CD4-positive, alpha-beta memory T cell (primary cell): ENCODE measurements at regions of chr6 and their contacts with region 1.

Region 1: GRCh38 chr6:26216356-26216885 is 129.2 kb downstream of the HFE start:
- DNase-seq: peak; percentile 88 to 96 (median 94)
- H3K4me3 ChIP-seq: peak overlapping the region; percentile 75 to 85
- H3K4me3 Mint-ChIP-seq: no peak overlapping the region
- H3K27ac ChIP-seq: peak overlapping the region; percentile 82
- H3K27ac Mint-ChIP-seq: no peak overlapping the region
- H3K4me1 ChIP-seq: peaks cover 26% of the 10 kb centered on the region
- H3K4me1 Mint-ChIP-seq: peaks cover 0 to 5% (median 2%) of the 10 kb centered on the region in 4 donors
- H3K27me3 ChIP-seq: no peaks in the 10 kb centered on the region
- H3K27me3 Mint-ChIP-seq: no peaks in the 10 kb centered on the region

Region 2: GRCh38 chr6:25085756-25086155 is 1130.7 kb before region 1 on chr6:
- CTCF ChIA-PET with region 1: no interaction called
- POLR2A ChIA-PET with region 1: no interaction called
- intact Hi-C with region 1: no loop called
- DNase-seq: peak in 4 of 5 donors; percentile 14 to 37 (median 22)
- H3K4me3 ChIP-seq: peak overlapping the region in 1 of 2 donors; percentile 12
- H3K4me3 Mint-ChIP-seq: peak overlapping the region in 7 of 8 donors; percentile 44 to 74 (median 70)
- H3K27ac ChIP-seq: no peak overlapping the region
- H3K27ac Mint-ChIP-seq: peak overlapping the region in 5 of 7 donors; percentile 6 to 65 (median 23)
- H3K4me1 ChIP-seq: peaks cover 32% of the 10 kb centered on the region
- H3K4me1 Mint-ChIP-seq: peaks cover 10 to 26% (median 21%) of the 10 kb centered on the region in 4 donors
- H3K27me3 ChIP-seq: no peaks in the 10 kb centered on the region
- H3K27me3 Mint-ChIP-seq: no peaks in the 10 kb centered on the region

Region 3: DNA sequence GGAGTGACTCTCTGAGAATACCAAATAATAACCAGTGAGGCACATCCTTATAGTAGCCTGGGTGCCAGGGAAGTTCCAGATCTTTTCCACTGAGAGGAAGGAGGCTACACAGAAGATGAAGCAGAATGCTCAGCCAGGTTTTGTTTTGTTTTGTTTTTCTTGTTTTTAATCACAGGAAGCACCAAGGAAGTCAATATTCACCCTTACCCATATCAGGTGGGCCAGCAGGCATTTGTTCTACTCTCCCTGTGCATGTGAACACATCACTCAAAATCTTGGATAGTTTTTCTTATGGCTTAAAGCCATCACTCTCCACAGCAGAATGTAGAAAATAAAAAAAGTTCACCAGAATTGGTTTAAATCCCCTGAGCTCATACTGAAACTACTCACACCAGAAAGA is 395.1 kb before region 1 on chr6:
- CTCF ChIA-PET with region 1: no interaction called
- POLR2A ChIA-PET with region 1: no interaction called
- intact Hi-C with region 1: no loop called
- DNase-seq: no peak
- H3K4me3 ChIP-seq: no peak overlapping the region
- H3K4me3 Mint-ChIP-seq: no peak overlapping the region
- H3K27ac ChIP-seq: no peak overlapping the region
- H3K27ac Mint-ChIP-seq: no peak overlapping the region
- H3K4me1 ChIP-seq: no peaks in the 10 kb centered on the region
- H3K4me1 Mint-ChIP-seq: peaks cover 0 to 6% (median under 1%) of the 10 kb centered on the region in 4 donors
- H3K27me3 ChIP-seq: no peaks in the 10 kb centered on the region
- H3K27me3 Mint-ChIP-seq: peaks cover 5 to 6% of the 10 kb centered on the region in 2 donors

Region 4: GRCh38 chr6:25922301-25922700 is 294.1 kb before region 1 on chr6:
- CTCF ChIA-PET with region 1: no interaction called
- POLR2A ChIA-PET with region 1: no interaction called
- intact Hi-C with region 1: no loop called
- DNase-seq: no peak
- H3K4me3 ChIP-seq: no peak overlapping the region
- H3K4me3 Mint-ChIP-seq: no peak overlapping the region
- H3K27ac ChIP-seq: no peak overlapping the region
- H3K27ac Mint-ChIP-seq: no peak overlapping the region
- H3K4me1 ChIP-seq: no peaks in the 10 kb centered on the region
- H3K4me1 Mint-ChIP-seq: no peaks in the 10 kb centered on the region
- H3K27me3 ChIP-seq: no peaks in the 10 kb centered on the region
- H3K27me3 Mint-ChIP-seq: peaks cover 3 to 6% of the 10 kb centered on the region in 2 donors

Region 5: DNA sequence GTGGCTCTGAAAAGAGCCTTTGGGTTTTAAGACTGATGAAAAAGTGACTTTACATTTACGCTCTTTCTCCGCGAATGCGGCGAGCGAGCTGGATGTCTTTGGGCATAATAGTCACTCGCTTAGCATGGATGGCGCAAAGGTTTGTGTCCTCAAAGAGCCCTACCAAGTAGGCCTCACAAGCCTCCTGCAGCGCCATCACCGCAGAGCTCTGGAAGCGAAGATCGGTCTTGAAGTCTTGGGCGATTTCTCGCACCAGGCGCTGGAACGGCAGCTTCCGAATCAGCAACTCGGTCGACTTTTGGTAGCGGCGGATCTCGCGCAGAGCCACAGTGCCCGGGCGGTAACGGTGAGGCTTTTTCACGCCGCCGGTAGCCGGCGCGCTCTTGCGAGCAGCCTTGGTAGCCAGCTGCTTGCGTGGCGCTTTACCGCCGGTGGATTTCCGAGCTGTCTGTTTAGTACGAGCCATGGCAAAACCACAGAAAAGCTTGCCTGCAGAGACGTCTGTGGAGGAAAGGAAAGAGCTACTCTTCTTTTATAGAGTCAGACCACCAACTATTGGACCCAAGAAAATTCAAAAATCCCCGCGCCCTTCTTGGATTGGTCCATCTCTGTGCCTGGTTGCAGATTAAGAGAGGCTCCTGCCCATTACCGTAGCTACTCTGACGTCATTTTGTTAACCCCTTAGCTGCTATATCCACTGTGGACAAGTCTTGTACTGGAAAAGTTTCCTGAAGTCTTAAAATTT is 184.7 kb before region 1 on chr6:
- CTCF ChIA-PET with region 1: interaction called, 3 read pairs
- POLR2A ChIA-PET with region 1: interaction called, 47 read pairs
- intact Hi-C with region 1: loop called (anchors 5 kb)
- DNase-seq: peak; percentile 86 to 94 (median 89)
- H3K4me3 ChIP-seq: peak overlapping the region; percentile 53 to 67
- H3K4me3 Mint-ChIP-seq: peak overlapping the region; percentile 91 to 99 (median 94)
- H3K27ac ChIP-seq: peak overlapping the region; percentile 71
- H3K27ac Mint-ChIP-seq: peak overlapping the region; percentile 89 to 98 (median 96)
- H3K4me1 ChIP-seq: peaks cover 35% of the 10 kb centered on the region
- H3K4me1 Mint-ChIP-seq: peaks cover 33 to 54% (median 44%) of the 10 kb centered on the region in 4 donors
- H3K27me3 ChIP-seq: no peaks in the 10 kb centered on the region
- H3K27me3 Mint-ChIP-seq: peaks cover 0 to 3% of the 10 kb centered on the region in 2 donors

Region 6: DNA sequence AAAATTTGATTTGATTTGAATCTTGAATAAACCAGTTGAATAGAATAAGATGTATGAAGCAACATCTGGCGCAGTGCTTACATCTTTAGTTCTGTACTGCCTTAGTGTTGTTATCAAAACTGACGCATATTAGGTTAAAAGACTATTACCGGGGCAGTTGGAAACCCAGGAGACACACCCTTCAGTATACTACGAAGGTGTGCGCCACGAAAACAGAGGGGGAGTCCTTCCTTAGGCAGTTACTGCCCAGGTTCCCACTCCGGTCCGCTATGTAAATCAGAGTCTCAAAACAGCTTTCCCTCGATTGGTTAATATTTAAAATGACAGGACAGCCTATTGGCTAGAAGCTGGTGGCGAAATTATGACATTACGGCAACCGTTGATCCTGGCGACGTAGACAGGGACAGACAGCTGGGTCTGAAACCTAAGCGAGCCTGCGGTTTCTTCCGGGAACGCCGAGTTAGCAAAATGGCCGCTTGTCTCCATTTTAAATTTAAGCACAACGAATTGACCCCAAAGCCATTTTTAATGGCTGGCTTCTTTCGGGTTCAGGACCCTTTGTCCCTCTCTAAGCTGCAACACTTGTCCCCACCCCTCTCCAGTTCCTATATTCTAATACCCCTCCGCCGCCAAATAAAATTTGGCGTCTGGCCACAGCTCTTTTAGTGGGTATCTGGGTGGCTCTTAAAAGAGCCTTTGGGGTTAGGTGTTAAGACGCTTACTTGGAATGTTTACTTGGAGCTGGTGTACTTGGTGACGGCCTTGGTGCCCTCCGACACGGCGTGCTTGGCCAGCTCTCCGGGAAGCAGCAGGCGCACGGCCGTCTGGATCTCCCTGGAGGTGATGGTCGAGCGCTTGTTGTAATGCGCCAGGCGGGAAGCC is 93.4 kb before region 1 on chr6:
- CTCF ChIA-PET with region 1: interaction called, 8 read pairs
- POLR2A ChIA-PET with region 1: interaction called, 268 read pairs
- intact Hi-C with region 1: no loop called
- DNase-seq: peak; percentile 94 to 98 (median 98)
- H3K4me3 ChIP-seq: peak overlapping the region; percentile 87 to 98
- H3K4me3 Mint-ChIP-seq: peak overlapping the region; percentile 96 to 100 (median 100)
- H3K27ac ChIP-seq: peak overlapping the region; percentile 89
- H3K27ac Mint-ChIP-seq: peak overlapping the region; percentile 97 to 99 (median 99)
- H3K4me1 ChIP-seq: peaks cover 26% of the 10 kb centered on the region
- H3K4me1 Mint-ChIP-seq: peaks cover 20 to 54% (median 30%) of the 10 kb centered on the region in 4 donors
- H3K27me3 ChIP-seq: no peaks in the 10 kb centered on the region
- H3K27me3 Mint-ChIP-seq: peaks cover 0 to 3% of the 10 kb centered on the region in 2 donors

Region 7: GRCh38 chr6:26234421-26235296 is 18.2 kb after region 1 on chr6:
- CTCF ChIA-PET with region 1: interaction called, 23 read pairs
- POLR2A ChIA-PET with region 1: interaction called, 951 read pairs
- intact Hi-C with region 1: loop called (anchors 1 kb)
- DNase-seq: peak; percentile 70 to 87 (median 85)
- H3K4me3 ChIP-seq: peak overlapping the region; percentile 66 to 95
- H3K4me3 Mint-ChIP-seq: peak overlapping the region; percentile 93 to 99 (median 96)
- H3K27ac ChIP-seq: peak overlapping the region; percentile 83
- H3K27ac Mint-ChIP-seq: peak overlapping the region; percentile 90 to 99 (median 96)
- H3K4me1 ChIP-seq: peaks cover 23% of the 10 kb centered on the region
- H3K4me1 Mint-ChIP-seq: peaks cover 18 to 43% (median 26%) of the 10 kb centered on the region in 4 donors
- H3K27me3 ChIP-seq: no peaks in the 10 kb centered on the region
- H3K27me3 Mint-ChIP-seq: no peaks in the 10 kb centered on the region

Region 8: DNA sequence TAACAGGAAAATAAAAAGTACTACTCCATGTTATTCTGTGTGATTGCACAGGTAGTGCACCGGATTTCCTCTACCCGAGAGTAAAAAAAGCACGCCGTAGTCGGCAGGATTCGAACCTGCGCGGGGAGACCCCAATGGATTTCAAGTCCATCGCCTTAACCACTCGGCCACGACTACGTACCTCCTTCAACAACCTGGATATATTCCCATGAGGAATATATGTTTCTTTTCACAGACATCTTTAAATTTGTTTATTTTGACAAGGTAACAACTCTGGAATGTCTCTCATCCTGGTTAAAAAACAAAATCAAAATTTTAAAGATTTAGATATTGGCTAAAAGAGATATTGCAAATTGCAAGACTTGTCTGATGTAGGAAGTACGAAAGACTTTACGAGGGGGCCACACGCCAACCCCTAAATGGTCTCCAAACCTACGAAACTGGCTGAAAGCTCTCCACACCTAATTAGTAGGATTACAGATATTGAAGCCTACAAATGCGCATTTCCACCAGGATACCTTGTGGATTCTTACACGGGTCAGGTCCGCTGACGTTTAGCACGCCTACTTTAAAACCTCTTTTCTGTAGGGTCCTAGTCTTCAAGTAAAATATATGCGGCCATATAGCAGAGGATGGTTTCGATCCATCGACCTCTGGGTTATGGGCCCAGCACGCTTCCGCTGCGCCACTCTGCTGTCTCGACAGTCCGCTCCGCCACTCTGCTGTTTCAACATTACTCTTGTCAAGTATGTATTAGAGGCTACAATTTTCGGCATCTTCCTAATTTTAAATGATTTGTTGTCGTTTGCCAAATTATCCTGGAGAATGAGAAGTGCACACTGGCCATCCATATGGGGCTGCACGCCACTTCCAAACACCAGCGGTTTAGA is 96.3 kb after region 1 on chr6:
- CTCF ChIA-PET with region 1: no interaction called
- POLR2A ChIA-PET with region 1: interaction called, 17 read pairs
- intact Hi-C with region 1: no loop called
- DNase-seq: peak; percentile 84 to 88 (median 85)
- H3K4me3 ChIP-seq: peak overlapping the region; percentile 31 to 73
- H3K4me3 Mint-ChIP-seq: peak overlapping the region; percentile 81 to 95 (median 92)
- H3K27ac ChIP-seq: peak overlapping the region; percentile 56
- H3K27ac Mint-ChIP-seq: peak overlapping the region; percentile 92 to 99 (median 96)
- H3K4me1 ChIP-seq: peaks cover 29% of the 10 kb centered on the region
- H3K4me1 Mint-ChIP-seq: peaks cover 29 to 54% (median 39%) of the 10 kb centered on the region in 4 donors
- H3K27me3 ChIP-seq: no peaks in the 10 kb centered on the region
- H3K27me3 Mint-ChIP-seq: peaks cover 0 to 8% of the 10 kb centered on the region in 2 donors

Region 9: GRCh38 chr6:27146706-27147505 is 930.5 kb after region 1 on chr6:
- CTCF ChIA-PET with region 1: interaction called, 3 read pairs
- POLR2A ChIA-PET with region 1: interaction called, 33 read pairs
- intact Hi-C with region 1: no loop called
- DNase-seq: peak; percentile 85 to 96 (median 94)
- H3K4me3 ChIP-seq: peak overlapping the region; percentile 76 to 77
- H3K4me3 Mint-ChIP-seq: no peak overlapping the region
- H3K27ac ChIP-seq: peak overlapping the region; percentile 97
- H3K27ac Mint-ChIP-seq: no peak overlapping the region
- H3K4me1 ChIP-seq: peaks cover 22% of the 10 kb centered on the region
- H3K4me1 Mint-ChIP-seq: peaks cover 10 to 20% (median 13%) of the 10 kb centered on the region in 4 donors
- H3K27me3 ChIP-seq: no peaks in the 10 kb centered on the region
- H3K27me3 Mint-ChIP-seq: no peaks in the 10 kb centered on the region